OCI-LY7 (cell line): ENCODE measurements at regions of chr15 and their contacts with region 1.

Region 1: GRCh38 chr15:22253676-22254408 is 173.5 kb downstream of the OR4M2 start:
- DNase-seq: peak; percentile 36
- H3K4me3 ChIP-seq: peak overlapping the region; percentile 14
- H3K27ac ChIP-seq: peak overlapping the region; percentile 56
- H3K4me1 ChIP-seq: peaks cover 31% of the 10 kb centered on the region
- CTCF ChIP-seq: no peak

Region 2: DNA sequence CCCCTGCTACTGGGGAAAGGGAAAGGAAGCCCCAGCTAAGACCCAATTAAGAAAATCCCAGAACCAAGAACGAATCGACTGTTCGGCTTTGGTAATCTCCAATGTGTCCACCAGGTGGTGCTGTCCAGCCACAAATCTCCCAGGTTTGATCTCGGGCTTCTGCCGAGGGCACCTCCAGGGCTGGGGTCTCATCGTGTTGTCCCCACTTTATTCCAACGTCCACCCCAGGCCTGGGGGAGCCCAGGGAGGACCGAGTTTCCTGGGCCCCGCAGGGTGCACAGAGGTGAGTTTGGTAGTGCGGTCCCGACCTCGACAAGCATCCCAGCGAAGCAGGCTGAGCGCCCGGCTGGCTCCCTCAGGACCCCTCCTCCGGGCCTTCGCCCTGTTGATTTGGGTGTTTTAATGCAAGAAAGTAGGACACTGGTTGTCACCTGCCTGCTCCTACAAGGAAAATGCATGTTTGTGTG is 1897.4 kb before region 1 on chr15:
- CTCF ChIA-PET with region 1: no interaction called
- POLR2A ChIA-PET with region 1: no interaction called
- intact Hi-C with region 1: loop called (anchors 5 kb)
- DNase-seq: peak; percentile 59
- H3K4me3 ChIP-seq: no peak overlapping the region
- H3K27ac ChIP-seq: no peak overlapping the region
- H3K4me1 ChIP-seq: no peaks in the 10 kb centered on the region
- CTCF ChIP-seq: peak; percentile 84

Region 3: DNA sequence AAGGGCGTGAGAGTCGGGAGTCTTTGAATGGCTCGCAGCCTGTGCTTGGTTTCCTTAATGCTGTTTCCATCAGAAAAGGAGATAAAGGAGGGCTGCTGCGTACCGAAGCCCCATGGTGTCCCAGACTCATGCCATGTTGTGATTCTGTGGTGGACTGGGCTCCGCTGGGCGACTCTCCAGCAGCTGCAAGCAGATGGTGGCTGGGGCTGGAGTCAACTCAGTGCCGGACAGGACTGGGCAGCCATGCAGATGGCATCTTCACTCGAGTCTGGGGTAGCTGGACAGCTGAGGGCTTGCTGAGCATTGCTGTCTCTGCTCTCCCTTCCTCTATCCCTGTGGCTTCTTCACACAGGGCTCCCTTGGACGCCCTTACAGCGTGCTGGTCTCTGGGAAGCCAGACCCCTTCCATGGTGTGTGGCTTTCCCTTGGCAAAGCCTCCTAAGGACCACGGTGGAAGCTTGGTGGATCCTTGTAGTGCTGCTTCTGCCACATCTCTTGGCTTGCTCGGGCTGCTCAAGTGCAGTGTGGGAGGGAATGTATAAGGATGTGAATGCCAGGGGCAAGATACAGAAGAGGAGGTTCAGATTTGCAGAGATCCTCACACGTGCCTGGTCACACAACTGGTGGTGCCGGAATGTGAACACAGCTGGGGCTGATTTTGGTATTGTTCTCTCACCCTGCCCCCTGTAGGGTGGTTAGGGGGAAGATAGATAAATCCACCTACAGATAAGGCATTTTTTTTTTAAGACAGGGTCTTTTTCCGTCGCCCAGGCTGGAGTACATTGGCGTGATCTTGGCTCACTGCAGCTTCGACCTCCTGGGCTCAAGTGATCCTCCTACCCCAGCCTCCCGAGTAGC is 541.6 kb after region 1 on chr15:
- CTCF ChIA-PET with region 1: no interaction called
- POLR2A ChIA-PET with region 1: no interaction called
- intact Hi-C with region 1: loop called (anchors 10 kb)
- DNase-seq: peak; percentile 65
- H3K4me3 ChIP-seq: peak overlapping the region; percentile 56
- H3K27ac ChIP-seq: peak overlapping the region; percentile 97
- H3K4me1 ChIP-seq: peaks cover 89% of the 10 kb centered on the region
- CTCF ChIP-seq: peak; percentile 52